CD4-positive, alpha-beta T cell (primary cell): ENCODE measurements at regions of chr1 and their contacts with region 1.

Region 1: GRCh38 chr1:200409761-200410565 is at the start of gene ZNF281:
- DNase-seq: peak; percentile 86 to 97 (median 92)
- ATAC-seq: peak; percentile 96
- H3K4me3 ChIP-seq: peak within 1 kb of the TSS; percentile 93
- H3K4me3 Mint-ChIP-seq: peak within 1 kb of the TSS; percentile 98
- H3K27ac ChIP-seq: peak within 1 kb of the TSS; percentile 68 to 81
- H3K27ac Mint-ChIP-seq: peak within 1 kb of the TSS; percentile 87
- H3K4me1 ChIP-seq: peaks cover 25% of the 10 kb centered on the region
- H3K4me1 Mint-ChIP-seq: peaks cover 56% of the 10 kb centered on the region
- H3K27me3 ChIP-seq: no peaks in the 10 kb centered on the region
- H3K27me3 Mint-ChIP-seq: no peaks in the 10 kb centered on the region
- CTCF ChIP-seq: no peak
- total RNA-seq, gene ZNF281: 27.6 to 29.3 TPM

Region 2: DNA sequence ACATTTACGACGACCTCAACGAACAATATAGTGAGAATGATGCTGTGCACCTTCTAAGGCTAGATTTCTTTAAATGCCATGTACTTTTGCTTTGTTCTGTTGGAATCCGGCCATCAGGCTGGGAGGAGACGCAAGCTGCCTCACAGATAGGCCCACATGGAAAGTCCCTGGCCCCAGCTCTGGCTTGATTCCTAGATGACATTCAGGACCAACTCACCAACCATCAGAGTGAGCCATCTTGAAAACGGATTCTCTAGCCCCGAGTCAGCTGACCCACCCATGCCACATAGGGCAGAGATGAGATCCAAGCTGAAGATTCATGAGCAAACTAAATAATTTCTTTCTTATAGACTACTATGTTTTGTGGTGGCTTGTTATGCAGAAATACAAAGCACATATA is 164.5 kb before region 1 on chr1:
- CTCF ChIA-PET with region 1: no interaction called
- POLR2A ChIA-PET with region 1: no interaction called
- intact Hi-C with region 1: no loop called
- DNase-seq: no peak
- ATAC-seq: no peak
- H3K4me3 ChIP-seq: no peak overlapping the region
- H3K4me3 Mint-ChIP-seq: no peak overlapping the region
- H3K27ac ChIP-seq: no peak overlapping the region
- H3K27ac Mint-ChIP-seq: no peak overlapping the region
- H3K4me1 ChIP-seq: no peaks in the 10 kb centered on the region
- H3K4me1 Mint-ChIP-seq: peaks cover 7% of the 10 kb centered on the region
- H3K27me3 ChIP-seq: peaks cover 0 to 24% of the 10 kb centered on the region in 2 experiments
- H3K27me3 Mint-ChIP-seq: peaks cover 37% of the 10 kb centered on the region
- CTCF ChIP-seq: no peak

Region 3: GRCh38 chr1:200302192-200302920 is 107.6 kb before region 1 on chr1:
- CTCF ChIA-PET with region 1: interaction called, 3 read pairs
- POLR2A ChIA-PET with region 1: interaction called, 8 read pairs
- intact Hi-C with region 1: loop called (anchors 5 to 10 kb)
- DNase-seq: peak; percentile 41 to 86 (median 63)
- ATAC-seq: peak; percentile 96
- H3K4me3 ChIP-seq: peak overlapping the region; percentile 69
- H3K4me3 Mint-ChIP-seq: peak overlapping the region; percentile 97
- H3K27ac ChIP-seq: peak overlapping the region; percentile 52 to 54
- H3K27ac Mint-ChIP-seq: peak overlapping the region; percentile 92
- H3K4me1 ChIP-seq: peaks cover 16% of the 10 kb centered on the region
- H3K4me1 Mint-ChIP-seq: peaks cover 30% of the 10 kb centered on the region
- H3K27me3 ChIP-seq: no peaks in the 10 kb centered on the region
- H3K27me3 Mint-ChIP-seq: no peaks in the 10 kb centered on the region
- CTCF ChIP-seq: no peak

Region 4: GRCh38 chr1:200448034-200448762 is 38.2 kb after region 1 on chr1:
- CTCF ChIA-PET with region 1: no interaction called
- POLR2A ChIA-PET with region 1: no interaction called
- intact Hi-C with region 1: no loop called
- DNase-seq: no peak
- ATAC-seq: no peak
- H3K4me3 ChIP-seq: no peak overlapping the region
- H3K4me3 Mint-ChIP-seq: no peak overlapping the region
- H3K27ac ChIP-seq: no peak overlapping the region
- H3K27ac Mint-ChIP-seq: no peak overlapping the region
- H3K4me1 ChIP-seq: no peaks in the 10 kb centered on the region
- H3K4me1 Mint-ChIP-seq: no peaks in the 10 kb centered on the region
- H3K27me3 ChIP-seq: no peaks in the 10 kb centered on the region
- H3K27me3 Mint-ChIP-seq: no peaks in the 10 kb centered on the region
- CTCF ChIP-seq: no peak

Region 5: DNA sequence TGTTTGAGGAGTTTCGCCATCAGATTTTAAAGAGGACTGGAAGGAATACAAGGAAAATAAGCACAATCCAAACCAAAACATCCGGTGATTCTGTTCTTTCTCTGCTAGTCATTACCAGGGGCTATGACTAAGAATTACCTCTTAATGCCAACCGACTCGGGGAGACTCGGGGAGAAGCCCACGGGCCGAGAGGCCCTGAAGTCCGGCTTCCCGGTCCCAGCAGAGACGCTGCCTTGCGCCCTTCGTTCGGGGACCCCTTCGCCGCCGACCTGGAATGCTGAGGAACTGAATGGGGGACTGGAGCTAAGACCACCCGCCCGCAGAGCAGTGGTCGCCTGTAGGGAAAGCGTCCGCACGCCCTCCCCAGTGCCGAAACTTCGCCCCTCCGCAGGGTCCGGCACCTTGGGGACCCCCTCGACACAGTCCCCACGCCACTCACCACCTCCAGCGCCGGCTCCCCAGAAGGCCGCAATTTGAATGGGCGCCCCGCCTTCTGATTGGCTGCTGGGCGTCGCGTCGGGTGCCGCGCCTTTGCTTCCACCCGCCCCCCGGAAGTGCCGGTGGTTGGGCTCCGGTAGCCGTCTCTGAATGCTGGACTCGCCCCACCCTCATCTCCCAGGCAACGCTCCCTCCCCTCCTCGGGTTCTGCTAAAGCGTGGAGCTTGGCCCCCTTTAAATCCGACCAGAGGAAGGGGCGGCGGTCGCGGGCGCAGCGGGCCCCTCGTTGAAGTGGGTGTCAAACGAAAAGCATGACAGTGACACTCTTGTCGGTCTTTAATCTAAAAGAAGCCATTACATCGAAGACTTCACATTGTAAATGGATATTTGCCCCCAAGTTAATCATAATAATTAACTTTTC is 210.5 kb after region 1 on chr1 and contains the start of gene KIF14:
- CTCF ChIA-PET with region 1: no interaction called
- POLR2A ChIA-PET with region 1: no interaction called
- intact Hi-C with region 1: loop called in 1 of 2 experiments (anchors 5 kb)
- DNase-seq: peak; percentile 78 to 95 (median 88)
- ATAC-seq: peak; percentile 95
- H3K4me3 ChIP-seq: peak within 1 kb of the TSS; percentile 83
- H3K4me3 Mint-ChIP-seq: peak within 1 kb of the TSS; percentile 98
- H3K27ac ChIP-seq: peak within 1 kb of the TSS; percentile 23 to 52
- H3K27ac Mint-ChIP-seq: peak within 1 kb of the TSS; percentile 90
- H3K4me1 ChIP-seq: peaks cover 19% of the 10 kb centered on the region
- H3K4me1 Mint-ChIP-seq: peaks cover 31% of the 10 kb centered on the region
- H3K27me3 ChIP-seq: no peaks in the 10 kb centered on the region
- H3K27me3 Mint-ChIP-seq: no peaks in the 10 kb centered on the region
- CTCF ChIP-seq: no peak
- total RNA-seq, gene KIF14: 0.11 TPM

Region 6: DNA sequence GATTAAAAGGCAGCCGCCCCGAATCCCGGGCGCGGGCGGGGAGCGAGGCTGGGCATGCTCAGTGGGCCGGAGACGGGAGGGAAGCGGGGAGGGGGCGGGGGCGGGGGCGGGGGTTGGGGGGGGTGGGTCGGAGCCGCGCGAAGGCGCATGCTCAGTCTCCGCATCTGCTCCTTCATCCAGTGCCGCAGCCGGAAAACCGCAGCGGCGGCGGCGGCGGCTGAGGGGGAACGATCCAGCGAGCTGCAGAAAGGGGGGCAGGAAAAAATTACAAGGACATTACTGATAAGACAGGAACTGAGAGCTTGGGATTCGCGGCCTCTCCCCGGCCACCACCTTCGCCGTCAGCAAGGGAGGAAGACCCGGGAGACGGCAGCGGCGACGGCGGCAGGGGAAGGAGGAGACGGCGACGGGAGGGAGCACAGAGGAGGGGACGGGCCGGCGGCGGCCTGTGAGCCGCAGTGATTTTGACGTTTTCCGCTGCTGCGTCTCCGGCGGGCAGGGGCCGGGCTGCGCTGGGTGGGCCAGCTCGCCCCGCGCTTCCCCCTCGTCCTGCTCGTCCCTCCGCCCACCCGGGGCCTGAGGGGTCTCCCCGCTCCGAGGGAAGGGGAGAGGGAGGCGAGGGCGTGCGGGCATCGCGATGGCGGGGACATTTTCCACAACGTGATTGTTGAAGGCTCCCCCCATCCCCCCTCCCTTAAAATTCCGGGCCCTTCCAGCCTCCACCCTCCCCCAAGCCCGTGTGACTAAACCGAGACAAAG is 329.0 kb after region 1 on chr1 and contains the start of gene CAMSAP2:
- CTCF ChIA-PET with region 1: no interaction called
- POLR2A ChIA-PET with region 1: no interaction called
- intact Hi-C with region 1: loop called in 1 of 2 experiments (anchors 10 kb)
- DNase-seq: peak; percentile 30 to 90 (median 60)
- ATAC-seq: peak; percentile 67
- H3K4me3 ChIP-seq: peak within 1 kb of the TSS; percentile 93
- H3K4me3 Mint-ChIP-seq: peak within 1 kb of the TSS; percentile 100
- H3K27ac ChIP-seq: peak within 1 kb of the TSS; percentile 29 to 36
- H3K27ac Mint-ChIP-seq: peak within 1 kb of the TSS; percentile 90
- H3K4me1 ChIP-seq: peaks cover 17% of the 10 kb centered on the region
- H3K4me1 Mint-ChIP-seq: peaks cover 46% of the 10 kb centered on the region
- H3K27me3 ChIP-seq: no peaks in the 10 kb centered on the region
- H3K27me3 Mint-ChIP-seq: no peaks in the 10 kb centered on the region
- CTCF ChIP-seq: no peak
- total RNA-seq, gene CAMSAP2: 4.4 to 5.7 TPM